Natural killer cell (primary cell): ENCODE measurements at regions of chr12 and their contacts with region 1.

Region 1: DNA sequence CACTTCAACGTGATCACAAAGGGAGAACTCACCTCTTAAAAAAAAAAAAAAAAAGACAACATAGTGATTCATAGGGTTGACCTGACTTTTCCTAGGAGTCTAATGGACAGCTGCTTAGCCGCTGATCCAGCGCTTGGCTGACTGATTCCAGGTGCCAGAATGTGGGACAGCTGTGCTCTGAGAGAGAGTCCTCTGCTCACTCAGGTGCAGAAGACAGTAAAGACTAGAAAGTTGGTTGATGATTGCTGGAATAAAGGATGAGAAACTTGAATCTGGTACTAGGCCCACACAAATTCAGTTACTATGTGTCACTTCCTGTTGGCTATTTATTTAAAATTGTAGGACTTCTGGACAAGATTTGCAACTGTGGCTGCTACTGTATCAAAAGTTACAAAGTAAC is 229.4 kb downstream of the CHST11 start:
- DNase-seq: no peak
- ATAC-seq: no peak
- H3K4me3 ChIP-seq: no peak overlapping the region
- H3K4me3 Mint-ChIP-seq: peak overlapping the region; percentile 53
- H3K27ac ChIP-seq: no peak overlapping the region
- H3K27ac Mint-ChIP-seq: peak overlapping the region; percentile 93
- H3K4me1 ChIP-seq: peaks cover 86% of the 10 kb centered on the region
- H3K4me1 Mint-ChIP-seq: peaks cover 89 to 94% of the 10 kb centered on the region in 2 donors
- H3K27me3 ChIP-seq: no peaks in the 10 kb centered on the region
- H3K27me3 Mint-ChIP-seq: no peaks in the 10 kb centered on the region
- CTCF ChIP-seq: no peak

Region 2: GRCh38 chr12:104720339-104721038 is 34.3 kb after region 1 on chr12:
- intact Hi-C with region 1: loop called (anchors 2 kb)
- DNase-seq: peak; percentile 46 to 91
- ATAC-seq: peak; percentile 66 to 76 (median 71)
- H3K4me3 ChIP-seq: peak overlapping the region; percentile 33
- H3K4me3 Mint-ChIP-seq: peak overlapping the region; percentile 90
- H3K27ac ChIP-seq: peak overlapping the region; percentile 86
- H3K27ac Mint-ChIP-seq: peak overlapping the region; percentile 92 to 94
- H3K4me1 ChIP-seq: peaks cover 58% of the 10 kb centered on the region
- H3K4me1 Mint-ChIP-seq: peaks cover 60 to 87% of the 10 kb centered on the region in 2 donors
- H3K27me3 ChIP-seq: no peaks in the 10 kb centered on the region
- H3K27me3 Mint-ChIP-seq: no peaks in the 10 kb centered on the region
- CTCF ChIP-seq: no peak

Region 3: DNA sequence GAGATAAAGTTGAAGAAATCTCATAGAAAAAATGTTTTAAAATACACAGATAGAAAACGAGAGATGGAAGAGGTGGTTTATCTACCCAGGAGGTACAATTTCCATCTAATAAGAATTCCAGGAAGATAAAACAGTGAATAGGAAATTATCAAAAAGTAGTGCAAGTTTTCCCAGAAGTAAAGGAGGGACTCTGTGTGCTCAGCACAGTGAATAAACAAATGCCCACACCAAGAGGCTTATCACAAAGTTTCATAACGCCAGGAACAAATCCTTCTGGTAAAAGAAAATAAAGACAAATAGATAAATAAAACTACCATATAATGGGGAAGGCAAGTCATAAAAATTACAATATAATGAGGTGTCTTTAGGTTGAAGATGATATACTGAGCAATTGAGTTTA is 92.9 kb after region 1 on chr12:
- intact Hi-C with region 1: no loop called
- DNase-seq: no peak
- ATAC-seq: no peak
- H3K4me3 ChIP-seq: no peak overlapping the region
- H3K4me3 Mint-ChIP-seq: no peak overlapping the region
- H3K27ac ChIP-seq: no peak overlapping the region
- H3K27ac Mint-ChIP-seq: no peak overlapping the region
- H3K4me1 ChIP-seq: no peaks in the 10 kb centered on the region
- H3K4me1 Mint-ChIP-seq: no peaks in the 10 kb centered on the region
- H3K27me3 ChIP-seq: no peaks in the 10 kb centered on the region
- H3K27me3 Mint-ChIP-seq: peaks cover 0 to 13% of the 10 kb centered on the region in 2 donors
- CTCF ChIP-seq: no peak